ENCODE measurements at regions of chr17 and their contacts with region 1.

Region 1: DNA sequence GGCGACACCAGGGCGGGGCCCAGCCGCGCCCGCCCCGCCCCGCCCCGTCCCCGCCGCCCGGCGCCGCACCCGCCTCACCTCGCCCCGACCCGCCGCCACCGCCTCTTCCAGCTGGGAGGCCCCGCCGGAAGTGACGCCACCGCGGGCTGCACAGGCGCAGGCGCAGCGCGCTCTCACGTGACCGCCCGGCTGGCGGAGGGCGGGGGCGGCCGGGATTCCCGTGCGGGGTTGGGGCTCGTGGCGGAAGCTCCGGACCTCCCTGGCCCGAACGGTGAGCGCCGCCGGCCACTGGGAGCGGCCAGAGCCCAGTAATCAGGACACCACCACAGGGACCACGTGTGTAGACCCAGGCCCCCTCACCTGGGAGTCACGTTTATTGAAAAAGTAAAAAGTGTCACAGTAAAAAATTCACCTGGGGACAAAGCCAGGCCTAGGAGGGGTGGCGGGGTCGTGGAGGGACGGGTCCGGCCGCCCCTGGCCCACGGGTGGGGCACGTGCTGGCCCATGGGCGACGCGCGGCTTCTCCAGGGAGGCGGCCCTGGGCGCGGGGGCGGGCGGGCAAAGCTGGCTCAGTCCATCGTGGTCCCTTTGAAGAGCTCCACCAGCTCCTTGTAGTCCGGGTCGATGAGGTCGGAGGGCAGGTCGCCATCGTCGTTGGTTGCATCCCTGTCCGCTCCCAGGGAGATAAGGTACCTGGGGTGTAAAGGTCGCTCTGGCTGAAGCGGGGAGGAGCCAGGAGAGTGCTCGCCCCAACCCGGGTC is at the start of gene MCRIP1:
- DNase-seq: peak; percentile 98
- H3K4me3 ChIP-seq: peak within 1 kb of the TSS; percentile 83 to 98 (median 95)
- H3K27ac ChIP-seq: peak within 1 kb of the TSS; percentile 93 to 96 (median 95)
- H3K4me1 ChIP-seq: peaks cover 23 to 60% (median 46%) of the 10 kb centered on the region in 4 donors
- H3K27me3 ChIP-seq: no peaks in the 10 kb centered on the region
- CTCF ChIP-seq: no peak
- EP300 ChIP-seq: no peak
- POLR2A ChIP-seq: peak; percentile 82
- total RNA-seq, gene MCRIP1: 83.5 to 146 (median 114) TPM

Region 2: GRCh38 chr17:81871387-81872230 is 38.3 kb after region 1 on chr17:
- intact Hi-C with region 1: loop called (anchors 5 kb)
- DNase-seq: peak; percentile 98
- H3K4me3 ChIP-seq: peak overlapping the region; percentile 91 to 99 (median 95)
- H3K27ac ChIP-seq: peak overlapping the region; percentile 97 to 99 (median 99)
- H3K4me1 ChIP-seq: peaks cover 41 to 61% (median 53%) of the 10 kb centered on the region in 4 donors
- H3K27me3 ChIP-seq: no peaks in the 10 kb centered on the region
- CTCF ChIP-seq: peak; percentile 30 to 58 (median 45)
- EP300 ChIP-seq: no peak
- POLR2A ChIP-seq: peak; percentile 98

Measured in esophagus muscularis mucosa (tissue), 4 donors.